Tibial artery (tissue), 4 donors: ENCODE measurements at regions of chr1 and their contacts with region 1.

Region 1: DNA sequence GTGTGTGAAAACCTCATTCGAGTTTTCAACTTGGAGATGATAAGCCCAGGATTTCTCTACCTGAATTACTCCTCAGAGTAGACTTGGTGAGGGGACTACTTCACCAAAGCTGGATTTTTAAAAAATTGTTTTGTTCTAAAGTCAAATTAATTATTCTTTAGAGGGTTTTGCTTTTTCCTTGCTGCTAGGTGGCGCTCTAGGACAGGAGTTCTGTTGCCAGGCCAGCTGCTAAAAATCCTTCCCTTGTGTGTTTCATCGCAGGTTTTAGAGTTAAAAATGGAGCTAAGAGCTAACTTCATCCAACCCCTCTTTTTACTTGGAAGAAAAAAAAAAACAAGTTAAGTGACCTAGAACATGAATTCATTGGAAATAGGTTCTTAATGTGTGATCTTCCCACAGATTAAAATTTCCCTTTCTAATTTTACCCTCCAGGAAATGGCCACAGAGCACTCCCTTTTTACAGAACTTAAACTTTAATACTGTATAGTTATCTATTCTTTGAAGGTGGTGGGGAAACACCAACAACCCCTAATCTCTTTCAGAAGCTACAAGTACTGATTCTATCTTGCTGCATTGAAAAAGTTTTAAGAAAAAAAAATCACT is 36.7 kb upstream of the FAM163A start:
- DNase-seq: no peak
- H3K4me3 ChIP-seq: no peak overlapping the region
- H3K27ac ChIP-seq: no peak overlapping the region
- H3K4me1 ChIP-seq: no peaks in the 10 kb centered on the region
- H3K27me3 ChIP-seq: peaks cover 0 to 5% of the 10 kb centered on the region in 2 donors
- CTCF ChIP-seq: peak; percentile 64 to 70

Region 2: DNA sequence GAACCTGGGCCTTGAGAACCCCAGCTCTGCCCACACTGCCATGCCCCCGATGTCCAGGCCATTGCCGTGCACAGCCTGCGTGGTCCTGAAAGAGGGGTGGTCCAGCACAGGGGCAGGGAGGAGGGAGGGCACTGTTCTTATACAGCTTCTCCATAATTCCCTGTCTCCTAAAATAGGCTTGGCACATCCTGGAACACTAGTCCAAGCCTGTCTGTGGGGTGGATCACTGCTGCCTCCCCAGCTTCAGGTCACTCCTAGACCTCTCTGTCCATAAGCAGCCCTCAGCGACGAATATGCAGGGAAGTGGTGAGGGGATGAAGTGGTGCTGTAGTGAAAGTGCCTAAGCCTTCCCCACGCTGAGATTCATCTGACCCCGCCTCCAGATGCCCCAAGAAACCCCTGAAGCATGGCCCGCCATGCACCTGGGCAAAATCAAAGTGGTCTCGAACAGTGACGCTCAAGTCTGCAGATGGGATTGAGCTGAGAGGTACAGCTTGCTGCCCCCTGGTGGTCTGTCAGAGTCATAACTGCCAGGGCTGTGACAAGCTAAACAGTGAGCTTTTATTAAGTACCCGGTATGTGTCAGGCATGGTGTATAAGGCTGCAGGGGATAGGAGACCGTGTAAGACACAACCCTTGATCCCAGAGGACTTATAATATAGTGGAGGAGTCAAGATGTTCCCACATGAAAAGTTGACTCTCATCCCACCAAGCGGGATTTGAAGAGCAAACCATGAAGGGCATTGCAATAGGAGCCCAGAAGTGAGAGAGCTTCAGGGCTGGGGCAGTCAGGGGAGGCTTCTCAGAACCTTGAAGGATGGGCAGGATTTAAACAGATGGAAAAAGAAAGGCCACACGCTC is 103.3 kb after region 1 on chr1:
- intact Hi-C with region 1: loop called (anchors 5 kb)
- DNase-seq: peak in 1 of 2 donors; percentile 71
- H3K4me3 ChIP-seq: no peak overlapping the region
- H3K27ac ChIP-seq: no peak overlapping the region
- H3K4me1 ChIP-seq: peaks cover 0 to 10% (median 5%) of the 10 kb centered on the region in 4 donors
- H3K27me3 ChIP-seq: peaks cover 0 to 26% of the 10 kb centered on the region in 2 donors
- CTCF ChIP-seq: peak; percentile 82 to 95

Region 3: GRCh38 chr1:179882243-179883039 is 176.0 kb after region 1 on chr1 and contains the start of gene TOR1AIP1:
- intact Hi-C with region 1: no loop called
- DNase-seq: peak; percentile 95 to 99
- H3K4me3 ChIP-seq: peak within 1 kb of the TSS; percentile 63 to 92
- H3K27ac ChIP-seq: peak within 1 kb of the TSS; percentile 88 to 100
- H3K4me1 ChIP-seq: peaks cover 0 to 58% (median 43%) of the 10 kb centered on the region in 4 donors
- H3K27me3 ChIP-seq: no peaks in the 10 kb centered on the region
- CTCF ChIP-seq: peak; percentile 48 to 77